Breast epithelium (tissue), 4 donors: ENCODE measurements at regions of chr22 and their contacts with region 1.

Region 1: GRCh38 chr22:36028646-36029405 is at the start of gene RBFOX2:
- DNase-seq: peak; percentile 94 to 96
- H3K4me3 ChIP-seq: peak within 1 kb of the TSS; percentile 80 to 93 (median 87)
- H3K27ac ChIP-seq: peak within 1 kb of the TSS; percentile 87 to 95
- H3K4me1 ChIP-seq: no peaks in the 10 kb centered on the region
- H3K27me3 ChIP-seq: no peaks in the 10 kb centered on the region
- CTCF ChIP-seq: no peak
- POLR2A ChIP-seq: no peak
- total RNA-seq, gene RBFOX2: 63.4 to 97.3 (median 85.5) TPM

Region 2: GRCh38 chr22:35627264-35628041 is 401.4 kb before region 1 on chr22:
- intact Hi-C with region 1: loop called (anchors 10 kb)
- DNase-seq: peak; percentile 86 to 89
- H3K4me3 ChIP-seq: peak overlapping the region; percentile 42 to 78 (median 53)
- H3K27ac ChIP-seq: peak overlapping the region; percentile 86 to 95
- H3K4me1 ChIP-seq: peaks cover 4 to 9% of the 10 kb centered on the region in 2 donors
- H3K27me3 ChIP-seq: no peaks in the 10 kb centered on the region
- CTCF ChIP-seq: peak in 2 of 3 donors; percentile 20 to 54
- POLR2A ChIP-seq: peak; percentile 18

Region 3: GRCh38 chr22:36123673-36124630 is 95.1 kb after region 1 on chr22:
- intact Hi-C with region 1: loop called (anchors 5 kb)
- DNase-seq: peak; percentile 89 to 96
- H3K4me3 ChIP-seq: peak overlapping the region in 2 of 3 donors; percentile 32 to 54
- H3K27ac ChIP-seq: peak overlapping the region; percentile 89 to 90
- H3K4me1 ChIP-seq: no peaks in the 10 kb centered on the region
- H3K27me3 ChIP-seq: no peaks in the 10 kb centered on the region
- CTCF ChIP-seq: peak; percentile 96 to 99 (median 98)
- POLR2A ChIP-seq: no peak